Mammary epithelial cell (primary cell): ENCODE measurements at regions of chr2 and their contacts with region 1.

Region 1: DNA sequence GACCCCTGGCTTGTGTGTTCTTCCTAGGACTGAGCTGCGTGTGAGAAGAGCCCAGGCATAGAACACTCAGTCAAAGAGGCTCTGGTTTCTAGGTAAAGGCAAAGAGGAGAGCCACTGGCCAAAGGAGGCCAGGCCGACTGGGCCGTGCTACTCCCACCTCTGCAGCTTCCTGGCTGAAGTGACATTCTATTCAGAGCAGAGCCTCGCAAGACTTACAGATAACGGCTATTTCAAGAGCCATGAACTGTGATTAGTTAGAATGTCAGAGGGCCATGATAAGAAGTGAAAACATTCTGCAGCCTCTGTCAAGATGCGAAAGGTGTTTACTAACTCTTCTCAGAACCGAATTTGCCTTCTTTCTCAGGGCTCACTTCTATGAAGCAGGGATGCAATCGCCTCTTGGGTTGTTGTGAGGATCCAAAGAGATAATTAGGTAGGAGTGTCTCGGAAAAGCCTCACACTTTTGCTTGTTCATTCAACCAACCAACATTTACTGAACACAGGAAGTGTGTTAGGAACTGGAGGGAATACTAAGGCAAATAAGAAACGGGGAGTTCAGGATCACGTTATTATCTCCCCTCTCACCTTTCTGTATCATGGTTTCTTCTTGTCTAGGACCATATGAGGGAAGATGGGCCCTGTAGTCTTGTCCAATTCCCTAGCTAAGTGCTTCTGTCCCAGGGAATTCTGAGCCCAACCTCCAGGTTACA is 3.4 kb upstream of the DNAJC5G start:
- DNase-seq: no peak
- H3K4me3 ChIP-seq: no peak overlapping the region
- H3K27ac ChIP-seq: no peak overlapping the region
- H3K4me1 ChIP-seq: peaks cover 9% of the 10 kb centered on the region
- H3K27me3 ChIP-seq: no peaks in the 10 kb centered on the region
- CTCF ChIP-seq: no peak

Region 2: DNA sequence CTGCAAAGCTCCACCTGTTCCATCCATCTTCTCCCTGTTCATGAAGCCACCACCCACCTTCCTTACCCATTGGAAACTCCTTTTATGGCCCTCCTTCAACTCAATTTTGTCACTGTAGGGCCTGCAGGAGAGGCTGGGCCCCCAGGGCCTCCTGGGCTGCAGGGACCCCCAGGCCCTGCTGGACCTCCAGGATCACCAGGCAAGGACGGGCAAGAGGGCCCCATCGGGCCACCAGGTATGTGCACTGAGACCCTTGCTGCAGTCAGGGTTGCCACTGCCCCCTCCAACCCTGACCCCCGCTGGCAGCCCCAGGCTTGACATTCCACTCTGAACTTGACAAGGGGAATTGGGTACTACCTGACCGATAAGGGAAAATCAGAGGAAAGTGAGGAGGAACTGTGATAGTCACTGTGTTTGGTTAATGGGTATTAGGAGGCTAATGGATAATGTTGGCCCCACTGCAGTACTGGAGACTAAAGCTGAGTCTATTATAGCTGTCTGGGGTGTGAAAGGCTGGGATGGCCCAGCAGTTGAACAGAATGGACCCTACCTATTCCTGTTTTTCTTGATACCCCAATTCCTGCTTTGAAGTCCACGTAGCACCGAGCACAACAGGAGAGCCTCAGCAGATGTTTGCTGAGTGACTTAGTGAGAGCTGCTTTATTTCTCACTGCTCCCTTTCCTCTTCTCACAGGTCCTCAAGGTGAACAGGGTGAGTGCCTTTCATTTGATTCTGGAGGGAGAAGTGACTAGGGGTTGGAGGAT is 187.3 kb before region 1 on chr2:
- CTCF ChIA-PET with region 1: no interaction called
- dilution Hi-C with region 1: no loop called
- in situ Hi-C with region 1: no loop called
- intact Hi-C with region 1: no loop called
- DNase-seq: no peak
- H3K4me3 ChIP-seq: no peak overlapping the region
- H3K27ac ChIP-seq: no peak overlapping the region
- H3K4me1 ChIP-seq: peaks cover 32% of the 10 kb centered on the region
- H3K27me3 ChIP-seq: no peaks in the 10 kb centered on the region
- CTCF ChIP-seq: no peak

Region 3: GRCh38 chr2:27102329-27102728 is 169.5 kb before region 1 on chr2:
- CTCF ChIA-PET with region 1: interaction called, 4 read pairs
- dilution Hi-C with region 1: no loop called
- in situ Hi-C with region 1: loop called in 1 of 2 experiments (anchors 5 kb)
- intact Hi-C with region 1: no loop called
- DNase-seq: no peak
- H3K4me3 ChIP-seq: no peak overlapping the region
- H3K27ac ChIP-seq: no peak overlapping the region
- H3K4me1 ChIP-seq: no peaks in the 10 kb centered on the region
- H3K27me3 ChIP-seq: no peaks in the 10 kb centered on the region
- CTCF ChIP-seq: no peak

Region 4: DNA sequence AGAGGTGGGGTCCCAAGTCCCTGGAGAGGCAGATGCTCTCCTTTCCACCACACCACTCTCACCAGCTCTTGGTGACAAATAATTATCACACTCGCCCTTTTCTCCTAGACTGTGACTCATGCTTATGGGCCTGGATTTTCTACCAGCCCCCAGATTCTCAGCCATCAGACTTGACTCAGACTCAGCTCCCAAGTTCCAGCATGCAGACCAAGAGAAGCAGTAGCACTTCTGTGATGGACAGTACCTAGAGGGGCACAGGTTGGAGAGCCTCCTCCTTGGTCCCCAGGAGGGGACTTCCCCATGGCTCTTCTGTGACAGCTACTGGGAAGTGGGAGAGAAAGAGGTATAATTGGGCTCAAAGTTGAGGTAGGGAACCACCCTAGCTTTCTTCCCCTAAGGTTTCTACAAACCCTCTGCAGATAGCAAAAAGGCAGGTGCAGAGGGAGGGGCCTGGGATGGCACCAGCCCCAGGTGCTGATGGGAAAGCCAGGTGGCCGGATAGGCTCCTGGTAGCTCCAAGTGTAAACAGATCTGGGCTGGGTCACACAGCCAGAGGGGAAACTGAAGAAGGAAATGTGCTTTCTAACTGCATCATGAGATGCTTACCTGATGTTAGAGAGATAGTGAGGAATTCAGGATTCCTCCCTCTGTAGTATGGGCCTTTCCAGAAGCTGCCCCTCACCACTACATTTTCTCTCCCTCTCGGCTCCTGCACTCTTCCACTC is 118.8 kb before region 1 on chr2:
- CTCF ChIA-PET with region 1: no interaction called
- dilution Hi-C with region 1: loop called (anchors 5 kb)
- in situ Hi-C with region 1: no loop called
- intact Hi-C with region 1: no loop called
- DNase-seq: peak; percentile 73
- H3K4me3 ChIP-seq: no peak overlapping the region
- H3K27ac ChIP-seq: no peak overlapping the region
- H3K4me1 ChIP-seq: peaks cover 10% of the 10 kb centered on the region
- H3K27me3 ChIP-seq: no peaks in the 10 kb centered on the region
- CTCF ChIP-seq: no peak

Region 5: GRCh38 chr2:27241761-27242613 is 29.8 kb before region 1 on chr2:
- CTCF ChIA-PET with region 1: no interaction called
- dilution Hi-C with region 1: loop called (anchors 5 kb)
- in situ Hi-C with region 1: no loop called
- intact Hi-C with region 1: no loop called
- DNase-seq: no peak
- H3K4me3 ChIP-seq: no peak overlapping the region
- H3K27ac ChIP-seq: no peak overlapping the region
- H3K4me1 ChIP-seq: no peaks in the 10 kb centered on the region
- H3K27me3 ChIP-seq: no peaks in the 10 kb centered on the region
- CTCF ChIP-seq: no peak

Region 6: DNA sequence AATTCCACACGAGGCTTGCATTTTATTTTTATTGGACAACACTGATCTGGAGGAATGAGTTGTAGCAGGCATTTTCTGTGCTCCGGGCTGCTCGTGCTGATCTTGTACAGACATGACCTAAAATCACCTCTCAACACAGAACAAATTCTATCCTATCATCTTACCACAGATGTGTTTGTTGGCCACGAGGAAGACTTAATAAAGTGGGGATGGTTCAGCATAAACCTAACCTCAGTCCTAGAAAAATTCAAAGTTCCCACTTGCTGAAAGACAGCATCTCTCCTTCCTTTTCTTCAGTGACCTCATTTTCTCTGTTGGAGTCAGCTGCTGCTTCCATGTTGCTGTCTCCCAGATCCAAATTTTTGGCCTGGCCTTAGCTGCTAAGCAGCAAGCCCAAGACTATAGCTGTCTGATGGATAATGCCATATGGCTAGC is 573.1 kb after region 1 on chr2:
- CTCF ChIA-PET with region 1: no interaction called
- dilution Hi-C with region 1: no loop called
- in situ Hi-C with region 1: no loop called
- intact Hi-C with region 1: no loop called
- DNase-seq: peak; percentile 54
- H3K4me3 ChIP-seq: no peak overlapping the region
- H3K27ac ChIP-seq: no peak overlapping the region
- H3K4me1 ChIP-seq: peaks cover 19% of the 10 kb centered on the region
- H3K27me3 ChIP-seq: no peaks in the 10 kb centered on the region
- CTCF ChIP-seq: no peak